ENCODE measurements at regions of chr4 and their contacts with region 1.

Region 1: DNA sequence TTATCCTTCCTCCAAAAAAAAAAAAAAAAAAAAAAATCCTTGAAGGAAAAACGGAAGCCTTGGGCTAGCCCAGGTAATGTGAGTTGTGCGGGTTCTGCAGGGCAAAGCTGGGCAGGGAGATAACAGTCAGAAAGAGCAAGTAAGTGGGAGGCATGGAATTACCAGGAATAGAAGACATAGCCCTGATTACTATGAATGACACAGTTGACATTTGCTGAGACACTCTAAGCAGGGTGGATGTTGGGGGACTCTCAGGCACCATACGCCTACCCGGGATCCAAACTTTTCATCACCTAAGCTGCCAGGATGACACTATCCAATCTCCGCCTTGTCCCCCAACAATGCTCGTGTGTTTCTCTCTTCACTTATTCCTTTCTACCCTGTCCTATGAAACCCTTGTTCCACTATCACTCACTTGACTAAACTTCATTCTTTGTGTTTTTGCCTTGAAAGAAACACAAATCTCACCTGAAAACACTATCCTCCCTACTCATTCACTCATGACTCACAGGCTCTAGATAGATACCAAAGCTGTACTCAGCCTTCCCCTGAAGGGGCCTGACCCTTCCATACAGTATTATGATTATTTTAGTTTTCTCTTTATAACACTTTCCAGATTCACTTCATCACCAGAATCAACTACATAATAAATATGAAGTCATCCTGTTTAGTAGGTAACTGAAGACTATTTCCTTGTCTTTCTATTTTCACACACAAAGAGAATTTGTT is 158.4 kb downstream of the INPP4B start:
- DNase-seq: no peak
- ATAC-seq: no peak
- H3K4me3 ChIP-seq: no peak overlapping the region
- H3K4me3 Mint-ChIP-seq: no peak overlapping the region
- H3K27ac ChIP-seq: no peak overlapping the region
- H3K27ac Mint-ChIP-seq: peak overlapping the region in 1 of 2 donors; percentile 4
- H3K4me1 ChIP-seq: no peaks in the 10 kb centered on the region
- H3K4me1 Mint-ChIP-seq: peaks cover 13 to 29% (median 24%) of the 10 kb centered on the region in 3 donors
- H3K27me3 ChIP-seq: no peaks in the 10 kb centered on the region
- H3K27me3 Mint-ChIP-seq: no peaks in the 10 kb centered on the region

Region 2: DNA sequence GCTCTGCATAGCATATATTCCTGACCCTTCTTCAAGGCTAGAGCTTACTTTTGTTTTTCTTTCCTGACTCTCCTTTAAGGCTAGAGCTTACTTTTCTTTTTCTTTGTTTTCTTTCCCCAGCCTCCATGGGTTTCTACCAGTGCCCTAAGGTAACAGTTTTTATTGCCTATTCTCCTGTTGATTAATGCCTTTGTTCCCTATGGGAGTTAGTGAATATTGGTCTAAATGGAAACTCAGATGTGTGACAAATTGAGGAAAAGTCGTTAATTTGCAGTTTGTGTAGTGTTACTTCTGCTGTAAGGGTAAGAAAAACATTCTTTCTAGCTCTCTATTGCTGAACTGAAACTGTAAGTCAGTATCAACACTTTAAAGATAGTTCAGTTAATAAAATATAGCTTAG is 692.7 kb before region 1 on chr4:
- CTCF ChIA-PET with region 1: interaction called in 1 of 2 experiments, 13 read pairs
- POLR2A ChIA-PET with region 1: no interaction called
- DNase-seq: no peak
- ATAC-seq: no peak
- H3K4me3 ChIP-seq: no peak overlapping the region
- H3K4me3 Mint-ChIP-seq: no peak overlapping the region
- H3K27ac ChIP-seq: no peak overlapping the region
- H3K27ac Mint-ChIP-seq: no peak overlapping the region
- H3K4me1 ChIP-seq: no peaks in the 10 kb centered on the region
- H3K4me1 Mint-ChIP-seq: no peaks in the 10 kb centered on the region
- H3K27me3 ChIP-seq: no peaks in the 10 kb centered on the region
- H3K27me3 Mint-ChIP-seq: peaks cover 6 to 7% of the 10 kb centered on the region in 2 donors

Region 3: DNA sequence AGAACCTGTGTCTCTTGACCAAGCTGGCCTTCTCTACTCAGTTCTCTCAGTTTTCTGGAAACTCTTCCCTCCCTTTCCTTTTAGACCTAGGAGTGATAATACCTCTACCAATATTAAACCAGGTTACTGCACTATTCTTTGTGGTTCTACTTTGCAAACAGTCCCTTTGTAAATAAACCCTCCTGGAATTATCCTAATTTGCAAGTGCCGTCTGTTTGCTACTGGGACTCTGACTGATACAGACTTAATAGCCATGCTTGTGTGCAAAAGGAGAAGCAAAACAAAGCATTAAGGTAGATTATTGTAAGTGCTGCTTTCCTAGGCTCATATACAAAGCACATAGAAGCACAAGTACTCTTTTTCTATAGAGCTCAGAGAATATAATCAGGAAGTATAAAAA is 348.7 kb before region 1 on chr4:
- CTCF ChIA-PET with region 1: no interaction called
- POLR2A ChIA-PET with region 1: no interaction called
- DNase-seq: no peak
- ATAC-seq: no peak
- H3K4me3 ChIP-seq: no peak overlapping the region
- H3K4me3 Mint-ChIP-seq: no peak overlapping the region
- H3K27ac ChIP-seq: no peak overlapping the region
- H3K27ac Mint-ChIP-seq: peak overlapping the region; percentile 1 to 41
- H3K4me1 ChIP-seq: peaks cover 0 to 13% of the 10 kb centered on the region in 2 experiments
- H3K4me1 Mint-ChIP-seq: peaks cover 58 to 74% (median 70%) of the 10 kb centered on the region in 3 donors
- H3K27me3 ChIP-seq: no peaks in the 10 kb centered on the region
- H3K27me3 Mint-ChIP-seq: no peaks in the 10 kb centered on the region

Region 4: GRCh38 chr4:142600971-142601370 is 86.7 kb before region 1 on chr4:
- CTCF ChIA-PET with region 1: no interaction called
- POLR2A ChIA-PET with region 1: interaction called in 1 of 2 experiments, 13 read pairs
- DNase-seq: no peak
- ATAC-seq: no peak
- H3K4me3 ChIP-seq: no peak overlapping the region
- H3K4me3 Mint-ChIP-seq: no peak overlapping the region
- H3K27ac ChIP-seq: no peak overlapping the region
- H3K27ac Mint-ChIP-seq: no peak overlapping the region
- H3K4me1 ChIP-seq: no peaks in the 10 kb centered on the region
- H3K4me1 Mint-ChIP-seq: peaks cover 2 to 11% (median 5%) of the 10 kb centered on the region in 3 donors
- H3K27me3 ChIP-seq: no peaks in the 10 kb centered on the region
- H3K27me3 Mint-ChIP-seq: no peaks in the 10 kb centered on the region

Region 5: DNA sequence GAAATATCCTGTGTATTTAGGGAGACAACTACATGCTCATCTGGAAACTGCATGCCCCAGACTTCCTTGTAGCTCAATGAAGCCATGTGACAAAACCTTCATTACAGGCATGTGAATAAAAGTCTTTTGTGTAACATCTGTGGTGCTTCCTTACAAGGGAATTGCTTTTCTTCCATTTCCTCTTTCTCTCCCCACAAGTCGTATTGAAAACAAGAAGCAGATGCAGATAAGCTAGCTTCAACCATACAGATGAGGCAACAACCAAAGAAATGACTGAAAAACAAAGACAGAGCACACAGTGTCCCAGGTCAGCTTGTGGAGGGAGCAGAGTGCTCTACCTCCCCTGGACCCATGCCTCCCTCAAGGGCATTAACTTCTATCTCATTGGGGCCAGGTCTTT is 274.2 kb after region 1 on chr4:
- CTCF ChIA-PET with region 1: no interaction called
- POLR2A ChIA-PET with region 1: no interaction called
- DNase-seq: no peak
- ATAC-seq: no peak
- H3K4me3 ChIP-seq: no peak overlapping the region
- H3K4me3 Mint-ChIP-seq: no peak overlapping the region
- H3K27ac ChIP-seq: no peak overlapping the region
- H3K27ac Mint-ChIP-seq: no peak overlapping the region
- H3K4me1 ChIP-seq: peaks cover 0 to 4% of the 10 kb centered on the region in 2 experiments
- H3K4me1 Mint-ChIP-seq: no peaks in the 10 kb centered on the region
- H3K27me3 ChIP-seq: no peaks in the 10 kb centered on the region
- H3K27me3 Mint-ChIP-seq: peaks cover 4 to 8% of the 10 kb centered on the region in 2 donors

Region 6: DNA sequence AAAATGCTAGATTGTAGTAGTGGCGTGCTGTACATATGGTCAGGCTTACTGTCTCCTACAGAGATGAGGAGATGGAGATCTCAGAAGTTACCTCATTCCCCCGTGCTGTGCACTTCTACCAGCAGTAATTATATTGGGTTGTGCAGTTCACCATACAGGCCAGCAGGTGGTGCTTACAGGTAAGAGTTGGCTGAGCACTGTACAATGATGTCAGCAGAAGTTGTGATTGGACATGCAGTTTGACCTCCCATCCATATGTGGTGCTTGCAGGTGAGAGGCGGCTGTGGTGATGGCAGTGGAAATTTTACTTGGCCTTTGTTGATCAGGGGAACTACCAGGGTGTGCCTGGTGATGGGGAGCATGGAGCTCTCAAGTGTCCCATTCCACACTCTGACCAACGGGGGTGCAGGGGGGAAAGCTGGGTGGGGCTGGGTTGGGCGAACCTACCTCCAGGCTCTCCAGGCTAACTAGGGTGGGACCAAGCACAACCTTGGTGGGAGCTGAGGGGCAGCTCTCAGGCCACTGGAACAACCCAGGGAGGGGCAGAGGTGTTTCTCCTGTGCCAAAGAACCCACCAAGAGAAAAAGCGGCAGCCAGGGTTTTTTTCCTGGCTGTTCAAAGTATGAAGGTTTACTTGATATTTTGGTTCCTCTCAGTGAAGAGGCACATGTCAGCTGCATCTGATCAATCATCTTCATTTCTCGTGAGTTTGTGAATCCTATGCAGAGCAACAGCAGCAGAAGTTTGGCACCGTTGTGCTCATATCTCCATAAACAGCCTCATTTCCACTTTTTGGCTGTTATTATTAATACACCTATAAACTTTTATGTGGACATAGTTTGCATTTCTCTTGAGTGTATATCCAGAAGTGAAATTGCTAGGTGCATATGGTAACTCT is 1086.5 kb after region 1 on chr4:
- CTCF ChIA-PET with region 1: no interaction called
- POLR2A ChIA-PET with region 1: no interaction called
- DNase-seq: peak in 14 of 35 experiments; percentile 0 to 17 (median 3)
- ATAC-seq: peak in 3 of 4 experiments; percentile 55 to 68 (median 61)
- H3K4me3 ChIP-seq: no peak overlapping the region
- H3K4me3 Mint-ChIP-seq: no peak overlapping the region
- H3K27ac ChIP-seq: no peak overlapping the region
- H3K27ac Mint-ChIP-seq: no peak overlapping the region
- H3K4me1 ChIP-seq: no peaks in the 10 kb centered on the region
- H3K4me1 Mint-ChIP-seq: no peaks in the 10 kb centered on the region
- H3K27me3 ChIP-seq: no peaks in the 10 kb centered on the region
- H3K27me3 Mint-ChIP-seq: peaks cover 0 to 5% of the 10 kb centered on the region in 2 donors